ENCODE measurements at regions of chr10 and their contacts with region 1.

Region 1: GRCh38 chr10:49207113-49207512 is 18.9 kb upstream of the TMEM273 start:
- DNase-seq: no peak
- H3K4me3 ChIP-seq: no peak overlapping the region
- H3K27ac ChIP-seq: no peak overlapping the region
- H3K4me1 ChIP-seq: no peaks in the 10 kb centered on the region
- H3K27me3 ChIP-seq: peaks cover 13% of the 10 kb centered on the region; the same call in 1 of the 2 replicates
- CTCF ChIP-seq: no peak

Region 2: DNA sequence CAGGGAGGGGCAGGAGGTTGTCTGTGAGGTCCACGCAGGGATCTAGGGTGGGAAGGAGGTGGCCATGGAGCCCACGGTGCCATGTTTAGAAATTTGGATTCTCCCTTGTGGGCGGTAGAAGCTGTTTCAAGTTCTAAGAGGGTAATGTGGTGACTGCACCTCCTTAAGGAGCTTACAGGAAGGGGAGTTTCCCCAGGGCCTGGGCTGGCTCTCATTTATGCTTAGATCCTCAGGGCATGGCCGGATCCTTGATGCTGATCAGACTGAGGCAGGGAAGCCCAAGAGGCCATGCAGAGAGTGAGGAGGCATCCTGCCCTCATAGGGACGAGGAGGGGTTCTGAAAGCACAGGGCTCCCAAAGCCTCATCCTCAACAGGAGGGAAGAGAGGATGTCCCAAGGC is 437.1 kb after region 1 on chr10:
- CTCF ChIA-PET with region 1: interaction called, 11 read pairs
- POLR2A ChIA-PET with region 1: no interaction called
- intact Hi-C with region 1: no loop called
- DNase-seq: peak in 1 of 2 experiments; percentile 1
- H3K4me3 ChIP-seq: no peak overlapping the region
- H3K27ac ChIP-seq: no peak overlapping the region
- H3K4me1 ChIP-seq: no peaks in the 10 kb centered on the region
- H3K27me3 ChIP-seq: peaks cover 34% of the 10 kb centered on the region
- CTCF ChIP-seq: no peak